A549 (cell line): ENCODE measurements at regions of chr9 and their contacts with region 1.

Region 1: GRCh38 chr9:127742435-127743088 is 7.5 kb upstream of the TOR2A start:
- DNase-seq: peak; percentile 88 to 94
- ATAC-seq: peak; percentile 73 to 87
- H3K4me3 ChIP-seq: peak overlapping the region; percentile 42
- H3K27ac ChIP-seq: peak overlapping the region; percentile 6 to 71; a peak in 4 of 6 replicates
- H3K4me1 ChIP-seq: peaks cover 31% of the 10 kb centered on the region
- CTCF ChIP-seq: no peak
- EP300 ChIP-seq: no peak
- POLR2A ChIP-seq: no peak
- RAD21 ChIP-seq: no peak

Region 2: DNA sequence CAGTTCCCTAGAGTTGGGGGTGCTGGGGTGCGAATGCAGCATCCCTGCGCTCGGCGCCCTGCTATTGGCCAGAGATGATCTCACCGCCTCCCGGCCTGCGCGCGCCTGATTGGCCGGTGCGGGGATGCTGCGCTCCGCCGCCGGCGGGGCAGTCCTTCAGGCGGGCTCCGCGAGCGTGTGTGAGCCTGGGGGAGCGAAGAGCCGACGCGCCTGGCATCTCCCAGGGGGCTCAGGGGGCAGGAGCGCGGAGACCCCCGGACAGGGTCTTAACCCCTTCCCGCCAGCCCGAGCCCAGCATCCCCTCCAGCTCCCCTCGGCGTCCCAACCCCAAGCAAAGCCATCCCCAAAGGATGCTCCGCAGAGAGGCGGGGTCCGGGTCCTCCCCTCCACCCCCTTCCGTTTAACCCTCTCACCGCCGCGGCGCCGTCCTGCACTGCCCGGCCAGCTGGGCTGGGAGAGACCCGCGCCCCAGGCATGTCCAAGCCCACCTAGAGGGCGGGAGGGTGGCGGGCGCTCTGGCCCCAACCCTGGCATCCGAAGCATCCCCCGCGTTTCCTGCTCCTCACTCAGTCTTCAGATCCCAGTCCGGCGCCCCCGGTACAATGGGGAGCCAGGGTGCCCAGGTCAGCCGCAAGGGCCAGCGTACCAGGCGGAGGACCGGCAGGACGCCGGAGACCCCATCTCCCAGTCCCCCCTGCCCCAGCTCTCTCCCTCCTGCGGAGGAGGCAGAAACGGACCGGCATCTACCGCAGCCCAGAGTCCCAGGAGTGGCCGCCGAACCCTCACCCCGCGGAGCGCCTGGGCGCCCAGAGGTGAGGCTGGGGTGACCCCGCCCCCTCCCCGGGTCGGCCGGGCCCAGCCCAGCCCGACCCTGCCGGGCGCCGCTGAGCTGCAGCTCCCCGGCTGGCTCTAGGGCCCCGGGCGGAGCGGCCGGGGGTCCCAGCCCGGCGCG is 11.8 kb after region 1 on chr9:
- CTCF ChIA-PET with region 1: interaction called, 13 read pairs
- POLR2A ChIA-PET with region 1: no interaction called
- DNase-seq: peak; percentile 38 to 82
- ATAC-seq: peak; percentile 78 to 93; a peak in 5 of 6 replicates
- H3K4me3 ChIP-seq: peak overlapping the region; percentile 45
- H3K27ac ChIP-seq: peak overlapping the region in 1 of 2 experiments; percentile 54; a peak in 2 of 6 replicates
- H3K4me1 ChIP-seq: peaks cover 14% of the 10 kb centered on the region
- CTCF ChIP-seq: no peak
- EP300 ChIP-seq: no peak
- POLR2A ChIP-seq: no peak
- RAD21 ChIP-seq: no peak

Region 3: GRCh38 chr9:127770905-127771569 is 28.5 kb after region 1 on chr9:
- CTCF ChIA-PET with region 1: interaction called, 15 read pairs
- POLR2A ChIA-PET with region 1: interaction called, 5 read pairs
- DNase-seq: peak; percentile 86 to 98
- ATAC-seq: peak; percentile 92 to 98
- H3K4me3 ChIP-seq: peak overlapping the region; percentile 40
- H3K27ac ChIP-seq: peak overlapping the region in 1 of 2 experiments; percentile 54; a peak in 2 of 6 replicates
- H3K4me1 ChIP-seq: peaks cover 4% of the 10 kb centered on the region; the same call in 1 of the 3 replicates
- CTCF ChIP-seq: no peak
- EP300 ChIP-seq: no peak
- POLR2A ChIP-seq: no peak
- RAD21 ChIP-seq: no peak